Dendritic cell treated with granulocyte-macrophage colony-stimulating factor and Interleukin-4, amounts not matched to agents 40 ng/mL and 50 ng/mL, for 4 days (primary cell): ENCODE measurements at regions of chr6 and their contacts with region 1.

Region 1: GRCh38 chr6:10694302-10695085 is at the starts of genes C6orf52 and PAK1IP1:
- H3K4me3 Mint-ChIP-seq: peak within 1 kb of the TSS; percentile 99
- H3K27ac Mint-ChIP-seq: peak within 1 kb of the TSS; percentile 98
- H3K4me1 Mint-ChIP-seq: peaks cover 41% of the 10 kb centered on the region
- H3K27me3 Mint-ChIP-seq: no peaks in the 10 kb centered on the region

Region 2: GRCh38 chr6:10510592-10511367 is 183.7 kb before region 1 on chr6:
- intact Hi-C with region 1: loop called (anchors 2 kb)
- H3K4me3 Mint-ChIP-seq: peak overlapping the region; percentile 44
- H3K27ac Mint-ChIP-seq: no peak overlapping the region
- H3K4me1 Mint-ChIP-seq: no peaks in the 10 kb centered on the region
- H3K27me3 Mint-ChIP-seq: no peaks in the 10 kb centered on the region

Region 3: DNA sequence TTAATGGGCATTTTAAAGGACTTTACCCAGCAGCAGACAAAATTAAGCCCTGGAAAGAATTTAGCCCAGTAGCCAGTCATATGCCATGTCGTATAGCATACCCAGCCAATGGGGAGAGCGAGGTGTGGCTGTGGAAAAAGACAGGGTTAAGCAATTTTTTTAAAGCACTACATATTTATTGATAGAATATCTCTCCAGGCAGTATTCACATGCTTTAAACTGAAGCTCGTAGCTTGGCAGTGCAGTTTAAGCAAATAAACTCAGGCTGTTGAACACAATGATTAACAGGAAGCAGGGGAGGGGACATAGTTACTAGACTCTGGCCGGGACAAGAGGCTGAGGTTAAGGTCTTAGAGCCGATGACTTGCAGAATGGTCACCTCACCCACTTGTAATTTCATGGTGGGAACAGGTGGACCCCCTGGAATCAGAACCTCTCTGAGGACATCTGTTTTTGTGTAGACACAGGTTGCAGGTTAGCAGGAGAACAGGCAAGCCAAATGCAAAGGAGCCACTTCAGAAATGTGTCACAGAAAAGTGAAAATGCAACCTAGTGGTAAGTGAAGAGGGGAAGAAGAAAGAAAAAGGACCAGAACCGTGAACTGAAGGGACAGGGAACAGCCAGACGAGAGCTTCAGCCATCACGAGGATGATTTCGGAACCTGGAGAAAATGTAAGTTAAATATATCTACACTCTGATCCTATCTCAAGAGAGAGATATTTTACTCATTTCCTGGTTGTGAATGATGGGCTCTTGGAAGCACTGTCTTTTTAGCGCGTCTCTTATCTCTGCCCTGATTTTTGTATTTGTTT is 166.1 kb before region 1 on chr6:
- intact Hi-C with region 1: loop called (anchors 5 kb)
- H3K4me3 Mint-ChIP-seq: peak overlapping the region; percentile 91
- H3K27ac Mint-ChIP-seq: peak overlapping the region; percentile 86
- H3K4me1 Mint-ChIP-seq: peaks cover 62% of the 10 kb centered on the region
- H3K27me3 Mint-ChIP-seq: no peaks in the 10 kb centered on the region

Region 4: GRCh38 chr6:10722820-10723566 is 28.5 kb after region 1 on chr6 and contains the start of gene TMEM14C:
- intact Hi-C with region 1: loop called (anchors 1 kb)
- H3K4me3 Mint-ChIP-seq: peak within 1 kb of the TSS; percentile 93
- H3K27ac Mint-ChIP-seq: peak within 1 kb of the TSS; percentile 97
- H3K4me1 Mint-ChIP-seq: peaks cover 53% of the 10 kb centered on the region
- H3K27me3 Mint-ChIP-seq: no peaks in the 10 kb centered on the region

Region 5: GRCh38 chr6:10747251-10747972 is 52.9 kb after region 1 on chr6 and contains the start of gene TMEM14B:
- intact Hi-C with region 1: loop called (anchors 1 kb)
- H3K4me3 Mint-ChIP-seq: peak within 1 kb of the TSS; percentile 87
- H3K27ac Mint-ChIP-seq: peak within 1 kb of the TSS; percentile 92
- H3K4me1 Mint-ChIP-seq: peaks cover 34% of the 10 kb centered on the region
- H3K27me3 Mint-ChIP-seq: no peaks in the 10 kb centered on the region